ENCODE measurements at regions of chr12 and their contacts with region 1.

Region 1: DNA sequence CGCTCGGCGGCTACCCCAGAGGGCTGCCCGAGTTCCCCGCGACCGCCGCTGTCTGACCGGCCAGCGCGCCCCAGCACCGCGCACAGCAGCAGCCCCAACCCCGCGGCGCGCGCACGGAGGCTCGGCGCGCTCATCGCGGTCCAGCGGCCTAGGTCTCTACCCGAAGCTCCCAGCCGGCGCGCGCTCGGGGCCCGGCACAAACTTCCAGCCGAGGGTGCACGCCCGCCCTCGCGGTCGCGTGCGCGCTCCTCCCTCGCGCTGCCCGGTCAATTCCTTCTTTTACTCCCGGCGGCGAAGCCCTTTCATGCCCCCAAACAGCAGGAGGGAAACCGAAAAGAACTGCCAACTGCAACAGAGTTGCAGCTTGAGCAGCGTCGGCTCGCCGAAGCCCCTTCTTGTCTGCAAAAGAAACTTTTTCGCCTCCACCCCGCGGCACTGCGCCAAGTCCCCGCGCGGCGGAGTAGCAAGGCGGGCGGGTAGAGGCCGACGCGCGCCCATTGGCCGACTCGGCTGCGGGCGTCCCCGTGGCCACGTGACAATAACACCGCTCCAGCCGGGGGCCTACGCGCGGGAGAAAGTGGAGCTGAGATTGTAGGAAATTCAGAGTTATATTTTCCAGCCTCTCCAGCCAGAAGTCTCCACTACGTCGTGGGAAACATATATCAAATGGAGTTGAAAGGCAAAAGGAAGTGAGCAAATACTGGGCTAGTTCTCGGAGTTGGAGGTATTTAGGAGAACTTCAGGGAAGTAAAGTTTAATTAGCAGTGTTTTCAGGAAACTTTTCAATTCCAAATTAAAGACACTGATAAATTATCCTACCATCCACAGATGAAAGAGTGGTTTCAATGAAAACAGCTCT is at the start of gene LRIG3:
- DNase-seq: peak; percentile 89
- H3K4me3 Mint-ChIP-seq: peak within 1 kb of the TSS; percentile 94
- H3K27ac Mint-ChIP-seq: peak within 1 kb of the TSS; percentile 98
- H3K4me1 Mint-ChIP-seq: peaks cover 30% of the 10 kb centered on the region
- H3K27me3 Mint-ChIP-seq: no peaks in the 10 kb centered on the region
- CTCF ChIP-seq: no peak
- total RNA-seq, gene LRIG3: 26.5 and 41.5 TPM in 2 replicates

Region 2: GRCh38 chr12:58202933-58203718 is 717.2 kb before region 1 on chr12:
- CTCF ChIA-PET with region 1: no interaction called
- POLR2A ChIA-PET with region 1: no interaction called
- intact Hi-C with region 1: no loop called
- DNase-seq: no peak
- H3K4me3 Mint-ChIP-seq: no peak overlapping the region
- H3K27ac Mint-ChIP-seq: no peak overlapping the region
- H3K4me1 Mint-ChIP-seq: no peaks in the 10 kb centered on the region
- H3K27me3 Mint-ChIP-seq: no peaks in the 10 kb centered on the region
- CTCF ChIP-seq: no peak

Region 3: GRCh38 chr12:58425481-58426392 is 494.6 kb before region 1 on chr12:
- CTCF ChIA-PET with region 1: interaction called, 3 read pairs
- POLR2A ChIA-PET with region 1: interaction called, 5 read pairs
- intact Hi-C with region 1: loop called (anchors 10 kb)
- DNase-seq: peak; percentile 85
- H3K4me3 Mint-ChIP-seq: peak overlapping the region; percentile 37
- H3K27ac Mint-ChIP-seq: peak overlapping the region; percentile 97
- H3K4me1 Mint-ChIP-seq: peaks cover 45% of the 10 kb centered on the region
- H3K27me3 Mint-ChIP-seq: no peaks in the 10 kb centered on the region
- CTCF ChIP-seq: no peak

Region 4: DNA sequence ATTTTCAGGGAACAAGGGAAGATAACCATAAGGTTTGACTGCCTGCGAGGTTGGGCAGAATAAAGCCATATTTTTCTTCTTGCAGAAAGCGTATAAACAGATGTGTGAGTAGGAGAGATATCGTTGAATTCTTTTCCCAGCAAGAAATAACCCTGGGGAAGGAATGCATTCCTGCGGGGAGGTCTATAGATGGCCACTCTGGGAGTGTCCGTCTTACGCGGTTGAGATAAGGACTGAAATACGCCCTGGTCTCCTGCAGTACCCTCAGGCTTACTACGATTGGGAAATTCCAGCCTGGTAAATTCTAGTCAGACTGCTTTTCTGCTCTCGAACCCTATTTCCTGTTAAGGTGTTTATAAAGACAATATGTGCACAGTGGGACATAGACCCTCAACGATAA is 225.1 kb before region 1 on chr12:
- CTCF ChIA-PET with region 1: no interaction called
- POLR2A ChIA-PET with region 1: no interaction called
- intact Hi-C with region 1: no loop called
- DNase-seq: no peak
- H3K4me3 Mint-ChIP-seq: no peak overlapping the region
- H3K27ac Mint-ChIP-seq: no peak overlapping the region
- H3K4me1 Mint-ChIP-seq: no peaks in the 10 kb centered on the region
- H3K27me3 Mint-ChIP-seq: no peaks in the 10 kb centered on the region
- CTCF ChIP-seq: no peak

Region 5: GRCh38 chr12:58888131-58888783 is 32.1 kb before region 1 on chr12:
- CTCF ChIA-PET with region 1: interaction called, 4 read pairs
- POLR2A ChIA-PET with region 1: interaction called, 76 read pairs
- intact Hi-C with region 1: no loop called
- DNase-seq: peak; percentile 26
- H3K4me3 Mint-ChIP-seq: no peak overlapping the region
- H3K27ac Mint-ChIP-seq: peak overlapping the region; percentile 80
- H3K4me1 Mint-ChIP-seq: peaks cover 11% of the 10 kb centered on the region
- H3K27me3 Mint-ChIP-seq: no peaks in the 10 kb centered on the region
- CTCF ChIP-seq: no peak

Region 6: DNA sequence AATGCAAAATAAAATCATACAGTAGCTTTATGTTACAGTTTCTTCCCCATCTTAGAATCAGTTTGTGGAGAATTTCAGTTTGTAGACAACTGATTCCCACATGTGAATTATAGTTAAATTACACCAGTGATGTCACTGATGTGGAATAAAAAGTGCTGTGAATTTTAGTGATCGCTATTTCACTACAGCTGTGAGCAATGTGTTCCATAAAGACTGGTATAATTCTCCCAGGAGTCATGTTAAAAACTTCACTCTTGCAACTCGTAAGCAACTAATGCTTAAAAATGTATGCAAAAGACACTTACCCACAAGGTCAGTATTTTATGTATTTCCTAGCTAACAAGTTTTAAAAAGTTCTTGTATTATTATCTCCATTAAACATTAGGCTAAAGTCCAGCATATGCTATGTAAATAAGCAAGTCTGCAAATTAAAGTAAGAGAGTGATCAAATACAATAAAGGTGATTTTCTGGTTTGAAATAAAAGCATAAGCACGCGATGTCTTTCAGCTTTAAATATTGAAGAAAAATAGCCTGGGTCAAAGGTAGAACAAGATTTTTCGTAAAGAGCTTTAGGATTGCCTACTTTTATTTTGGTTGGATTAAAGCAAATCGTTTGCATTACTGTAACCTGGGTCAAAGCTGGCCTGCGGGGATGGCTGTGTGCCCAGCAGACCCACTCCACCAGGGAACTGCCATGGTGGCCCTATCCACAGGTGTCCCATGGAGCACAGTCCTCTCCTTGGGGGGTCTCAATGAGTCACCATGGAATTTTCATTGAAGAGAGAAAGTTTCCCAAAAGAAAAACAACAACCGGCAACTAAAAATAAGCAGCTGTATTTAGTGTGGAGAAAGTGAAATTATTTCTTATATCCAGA is 12.7 kb after region 1 on chr12:
- CTCF ChIA-PET with region 1: interaction called, 13 read pairs
- POLR2A ChIA-PET with region 1: interaction called, 10 read pairs
- intact Hi-C with region 1: no loop called
- DNase-seq: no peak
- H3K4me3 Mint-ChIP-seq: no peak overlapping the region
- H3K27ac Mint-ChIP-seq: no peak overlapping the region
- H3K4me1 Mint-ChIP-seq: no peaks in the 10 kb centered on the region
- H3K27me3 Mint-ChIP-seq: no peaks in the 10 kb centered on the region
- CTCF ChIP-seq: no peak

Region 7: GRCh38 chr12:59067083-59067482 is 146.8 kb after region 1 on chr12:
- CTCF ChIA-PET with region 1: no interaction called
- POLR2A ChIA-PET with region 1: interaction called, 59 read pairs
- intact Hi-C with region 1: no loop called
- DNase-seq: no peak
- H3K4me3 Mint-ChIP-seq: no peak overlapping the region
- H3K27ac Mint-ChIP-seq: peak overlapping the region; percentile 9
- H3K4me1 Mint-ChIP-seq: peaks cover 44% of the 10 kb centered on the region
- H3K27me3 Mint-ChIP-seq: no peaks in the 10 kb centered on the region
- CTCF ChIP-seq: no peak

Region 8: GRCh38 chr12:59149997-59150642 is 229.8 kb after region 1 on chr12:
- CTCF ChIA-PET with region 1: interaction called, 3 read pairs
- POLR2A ChIA-PET with region 1: no interaction called
- intact Hi-C with region 1: loop called (anchors 5 kb)
- DNase-seq: peak; percentile 84
- H3K4me3 Mint-ChIP-seq: no peak overlapping the region
- H3K27ac Mint-ChIP-seq: no peak overlapping the region
- H3K4me1 Mint-ChIP-seq: peaks cover 11% of the 10 kb centered on the region
- H3K27me3 Mint-ChIP-seq: no peaks in the 10 kb centered on the region
- CTCF ChIP-seq: peak; percentile 91

Region 9: DNA sequence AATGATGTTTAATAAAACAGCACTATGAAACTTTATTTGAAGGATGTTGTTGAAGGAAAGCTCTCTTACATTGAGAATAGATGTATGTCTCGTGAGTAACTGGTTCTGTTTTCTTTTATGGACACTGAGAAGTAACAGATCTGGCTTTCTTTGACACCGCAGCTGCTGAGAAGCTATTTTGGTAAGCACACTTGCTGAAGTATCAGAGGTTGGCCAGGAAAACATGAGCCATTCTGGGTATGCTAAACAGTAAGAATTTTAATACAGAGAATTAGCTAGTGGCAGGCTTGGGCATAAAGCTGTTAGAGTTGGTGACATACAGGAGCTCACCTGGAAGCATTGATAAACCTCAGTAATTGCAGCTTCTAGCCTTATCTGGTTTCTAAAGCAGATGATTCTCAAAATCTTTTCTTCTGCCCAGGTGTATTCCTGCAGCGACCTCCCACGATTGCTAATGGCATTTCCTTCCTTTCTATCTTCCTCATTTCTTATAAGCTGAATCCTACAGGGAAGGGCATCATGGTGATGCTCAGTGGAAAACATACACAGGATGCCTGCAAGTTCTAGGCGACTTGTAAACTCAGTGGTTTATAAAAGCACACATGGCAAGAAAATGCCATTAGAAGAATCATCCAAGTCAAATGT is 383.9 kb after region 1 on chr12:
- CTCF ChIA-PET with region 1: no interaction called
- POLR2A ChIA-PET with region 1: no interaction called
- intact Hi-C with region 1: no loop called
- DNase-seq: no peak
- H3K4me3 Mint-ChIP-seq: no peak overlapping the region
- H3K27ac Mint-ChIP-seq: no peak overlapping the region
- H3K4me1 Mint-ChIP-seq: no peaks in the 10 kb centered on the region
- H3K27me3 Mint-ChIP-seq: no peaks in the 10 kb centered on the region
- CTCF ChIP-seq: no peak

Region 10: GRCh38 chr12:59414051-59414450 is 493.7 kb after region 1 on chr12:
- CTCF ChIA-PET with region 1: no interaction called
- POLR2A ChIA-PET with region 1: no interaction called
- intact Hi-C with region 1: no loop called
- DNase-seq: no peak
- H3K4me3 Mint-ChIP-seq: no peak overlapping the region
- H3K27ac Mint-ChIP-seq: no peak overlapping the region
- H3K4me1 Mint-ChIP-seq: no peaks in the 10 kb centered on the region
- H3K27me3 Mint-ChIP-seq: no peaks in the 10 kb centered on the region
- CTCF ChIP-seq: no peak

Measured in MCF 10A (cell line).